Breast epithelium (tissue), 4 donors: ENCODE measurements at regions of chr5 and their contacts with region 1.

Region 1: DNA sequence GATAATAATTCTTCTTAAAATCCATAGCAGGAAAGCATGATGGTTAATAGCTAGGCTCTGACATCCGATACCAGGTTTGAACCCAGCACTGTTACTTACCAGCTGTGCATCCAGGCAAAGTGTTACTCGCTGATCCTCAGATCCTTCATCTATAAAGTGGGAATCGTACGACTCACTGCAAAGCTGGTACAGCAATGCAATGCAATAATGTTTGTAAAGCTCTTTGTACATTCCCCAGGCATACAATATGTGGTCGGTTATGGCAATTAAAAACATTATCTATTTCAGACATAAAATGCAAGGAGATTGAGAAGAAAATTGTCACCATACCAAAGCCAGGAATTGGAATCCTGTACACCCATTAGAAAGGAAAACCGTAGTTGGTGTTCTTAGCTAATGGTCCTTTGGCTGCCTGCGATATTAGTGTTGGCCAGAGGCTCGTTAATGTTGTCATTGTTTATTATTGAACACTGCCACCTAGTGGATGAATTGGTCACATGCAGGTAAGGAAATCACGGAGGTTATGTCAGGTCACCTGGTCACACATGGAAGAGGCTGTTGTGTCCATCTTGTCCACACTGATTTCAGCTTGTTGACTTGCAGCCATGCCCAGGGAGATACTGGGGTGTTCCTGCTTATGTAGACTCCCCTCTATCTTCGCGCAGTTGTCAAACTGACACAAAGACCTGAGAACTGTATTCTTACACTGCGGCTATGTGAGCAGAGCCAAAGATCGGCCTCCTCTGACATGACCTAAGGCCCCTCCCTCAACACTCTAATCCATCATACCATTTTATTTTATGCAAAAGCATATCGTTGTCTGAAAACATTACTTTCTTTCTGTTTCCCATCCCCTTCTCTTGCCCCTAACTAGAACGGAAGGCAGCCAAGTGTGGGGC is 87.5 kb upstream of the PPP2R2B start:
- DNase-seq: peak in 1 of 2 donors; percentile 54
- H3K4me3 ChIP-seq: no peak overlapping the region
- H3K27ac ChIP-seq: no peak overlapping the region
- H3K4me1 ChIP-seq: no peaks in the 10 kb centered on the region
- H3K27me3 ChIP-seq: no peaks in the 10 kb centered on the region
- CTCF ChIP-seq: peak; percentile 86 to 91 (median 88)
- POLR2A ChIP-seq: no peak

Region 2: DNA sequence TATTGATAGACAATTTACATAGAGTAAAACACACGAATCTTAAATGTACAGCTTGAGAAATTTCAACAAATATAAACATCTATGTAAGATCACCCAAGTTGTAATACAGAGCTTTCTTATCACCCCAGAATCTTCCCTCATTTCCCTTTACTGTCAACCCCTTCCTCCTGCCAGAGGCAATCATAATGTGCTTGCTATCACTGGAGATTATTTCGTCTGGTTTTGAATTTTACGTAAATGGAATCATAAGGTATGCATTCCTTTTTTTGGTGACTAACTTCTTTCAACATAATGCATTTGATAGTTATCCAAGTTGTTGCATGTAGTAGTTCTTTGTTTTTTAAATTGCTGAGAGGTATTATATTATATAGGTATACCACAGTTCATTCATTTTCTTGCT is 412.6 kb before region 1 on chr5:
- intact Hi-C with region 1: loop called (anchors 5 kb)
- DNase-seq: no peak
- H3K4me3 ChIP-seq: no peak overlapping the region
- H3K27ac ChIP-seq: no peak overlapping the region
- H3K4me1 ChIP-seq: no peaks in the 10 kb centered on the region
- H3K27me3 ChIP-seq: no peaks in the 10 kb centered on the region
- CTCF ChIP-seq: no peak
- POLR2A ChIP-seq: no peak